ENCODE measurements at regions of chr11 and their contacts with region 1.

Region 1: GRCh38 chr11:111926505-111927391 is 8.0 kb downstream of the C11orf52 start:
- DNase-seq: peak; percentile 96
- ATAC-seq: peak; percentile 93
- H3K4me3 Mint-ChIP-seq: peak overlapping the region; percentile 75
- H3K27ac Mint-ChIP-seq: peak overlapping the region; percentile 93
- H3K4me1 Mint-ChIP-seq: peaks cover 21% of the 10 kb centered on the region
- H3K27me3 Mint-ChIP-seq: no peaks in the 10 kb centered on the region
- CTCF ChIP-seq: no peak

Region 2: GRCh38 chr11:111718436-111718835 is 208.3 kb before region 1 on chr11:
- CTCF ChIA-PET with region 1: no interaction called
- POLR2A ChIA-PET with region 1: no interaction called
- intact Hi-C with region 1: no loop called
- DNase-seq: no peak
- ATAC-seq: no peak
- H3K4me3 Mint-ChIP-seq: no peak overlapping the region
- H3K27ac Mint-ChIP-seq: no peak overlapping the region
- H3K4me1 Mint-ChIP-seq: no peaks in the 10 kb centered on the region
- H3K27me3 Mint-ChIP-seq: no peaks in the 10 kb centered on the region
- CTCF ChIP-seq: no peak

Region 3: DNA sequence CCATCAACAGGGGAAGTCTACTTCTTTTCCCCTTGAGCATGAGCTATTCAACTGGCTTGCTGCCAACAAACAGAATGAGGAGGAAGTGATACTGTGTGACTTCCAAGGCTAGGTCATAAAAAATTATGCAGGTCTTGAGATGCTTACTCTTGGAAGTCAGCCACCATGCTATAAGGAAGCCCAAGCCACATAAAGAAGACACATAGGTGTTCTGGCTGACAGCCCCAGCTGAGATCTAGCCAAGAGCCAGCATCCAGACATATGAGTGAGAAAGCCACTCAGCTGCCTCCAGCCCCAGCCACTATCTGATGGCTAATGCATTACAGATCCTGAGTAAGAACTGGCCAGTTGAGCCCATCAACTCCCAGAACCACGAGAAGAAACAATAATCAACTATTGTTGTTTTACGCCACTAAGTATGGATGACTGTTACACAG is 129.6 kb before region 1 on chr11:
- CTCF ChIA-PET with region 1: no interaction called
- POLR2A ChIA-PET with region 1: no interaction called
- intact Hi-C with region 1: no loop called
- DNase-seq: no peak
- ATAC-seq: no peak
- H3K4me3 Mint-ChIP-seq: no peak overlapping the region
- H3K27ac Mint-ChIP-seq: no peak overlapping the region
- H3K4me1 Mint-ChIP-seq: peaks cover 9% of the 10 kb centered on the region
- H3K27me3 Mint-ChIP-seq: no peaks in the 10 kb centered on the region
- CTCF ChIP-seq: no peak

Region 4: GRCh38 chr11:111870886-111871692 is 55.7 kb before region 1 on chr11 and contains the start of gene ALG9:
- CTCF ChIA-PET with region 1: interaction called, 22 read pairs
- POLR2A ChIA-PET with region 1: interaction called, 11 read pairs
- intact Hi-C with region 1: no loop called
- DNase-seq: peak; percentile 92
- ATAC-seq: peak; percentile 91
- H3K4me3 Mint-ChIP-seq: peak within 1 kb of the TSS; percentile 94
- H3K27ac Mint-ChIP-seq: peak within 1 kb of the TSS; percentile 91
- H3K4me1 Mint-ChIP-seq: peaks cover 27% of the 10 kb centered on the region
- H3K27me3 Mint-ChIP-seq: no peaks in the 10 kb centered on the region
- CTCF ChIP-seq: peak; percentile 21
- total RNA-seq, gene ALG9: 32.0 to 36.6 TPM

Region 5: GRCh38 chr11:111878849-111879636 is 47.7 kb before region 1 on chr11 and contains the starts of genes CFAP68 and FDXACB1:
- CTCF ChIA-PET with region 1: interaction called, 6 read pairs
- POLR2A ChIA-PET with region 1: interaction called, 7 read pairs
- intact Hi-C with region 1: loop called (anchors 2 kb)
- DNase-seq: peak; percentile 97
- ATAC-seq: peak; percentile 94
- H3K4me3 Mint-ChIP-seq: peak within 1 kb of the TSS; percentile 88
- H3K27ac Mint-ChIP-seq: peak within 1 kb of the TSS; percentile 99
- H3K4me1 Mint-ChIP-seq: peaks cover 24% of the 10 kb centered on the region
- H3K27me3 Mint-ChIP-seq: no peaks in the 10 kb centered on the region
- CTCF ChIP-seq: peak; percentile 92
- total RNA-seq, gene CFAP68: 38.6 to 39.1 TPM
- total RNA-seq, gene FDXACB1: 6.9 to 7.1 TPM

Region 6: DNA sequence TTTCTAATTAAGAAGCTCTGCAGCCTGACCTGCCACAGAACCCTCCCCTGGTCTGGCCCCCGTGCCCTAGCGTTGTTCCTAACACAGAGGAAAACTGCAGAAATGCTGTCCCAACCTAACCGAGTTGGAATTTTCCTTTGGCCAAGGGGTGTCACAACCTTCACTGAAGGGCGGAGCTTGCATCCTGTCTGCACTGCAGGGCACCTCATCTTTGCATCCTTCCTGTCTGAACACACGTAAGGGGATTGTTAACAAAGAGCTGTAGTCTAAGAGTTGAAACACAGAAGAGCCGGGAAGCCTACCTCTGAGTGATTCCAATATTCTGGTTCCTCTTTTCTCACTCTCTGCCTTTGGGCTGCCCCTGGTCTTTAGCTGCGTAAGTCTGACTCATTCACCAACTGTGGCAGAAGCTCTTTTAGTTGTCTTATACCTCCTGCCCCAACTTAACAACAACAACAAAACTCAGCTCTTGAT is 12.0 kb after region 1 on chr11:
- CTCF ChIA-PET with region 1: interaction called, 12 read pairs
- POLR2A ChIA-PET with region 1: interaction called, 16 read pairs
- intact Hi-C with region 1: no loop called
- DNase-seq: peak; percentile 51
- ATAC-seq: peak; percentile 59
- H3K4me3 Mint-ChIP-seq: peak overlapping the region; percentile 75
- H3K27ac Mint-ChIP-seq: peak overlapping the region; percentile 82
- H3K4me1 Mint-ChIP-seq: peaks cover 54% of the 10 kb centered on the region
- H3K27me3 Mint-ChIP-seq: no peaks in the 10 kb centered on the region
- CTCF ChIP-seq: no peak